HAP-1 (cell line): ENCODE measurements at regions of chr12 and their contacts with region 1.

Region 1: DNA sequence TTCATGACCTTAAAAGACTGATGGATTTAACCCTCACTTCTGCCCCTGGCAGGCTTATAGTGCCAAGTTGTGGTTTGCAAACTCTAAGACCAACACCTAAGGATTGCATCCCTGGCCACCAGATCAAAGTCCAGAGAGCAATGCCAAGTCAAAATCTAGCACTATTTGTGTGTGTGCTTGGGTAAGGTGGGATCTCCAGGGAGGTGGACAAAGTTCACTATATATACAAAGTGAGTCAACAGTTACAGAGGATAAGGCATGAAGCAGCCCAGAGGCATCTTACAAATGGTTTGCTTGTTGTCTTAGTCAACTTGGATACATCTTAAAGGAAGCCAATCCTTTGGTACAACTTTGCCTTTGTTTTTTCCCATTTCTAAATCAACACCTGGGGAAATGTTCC is 137.3 kb downstream of the MSRB3 start:
- DNase-seq: no peak
- H3K4me3 ChIP-seq: no peak overlapping the region
- H3K4me1 ChIP-seq: no peaks in the 10 kb centered on the region
- H3K27me3 ChIP-seq: no peaks in the 10 kb centered on the region

Region 2: DNA sequence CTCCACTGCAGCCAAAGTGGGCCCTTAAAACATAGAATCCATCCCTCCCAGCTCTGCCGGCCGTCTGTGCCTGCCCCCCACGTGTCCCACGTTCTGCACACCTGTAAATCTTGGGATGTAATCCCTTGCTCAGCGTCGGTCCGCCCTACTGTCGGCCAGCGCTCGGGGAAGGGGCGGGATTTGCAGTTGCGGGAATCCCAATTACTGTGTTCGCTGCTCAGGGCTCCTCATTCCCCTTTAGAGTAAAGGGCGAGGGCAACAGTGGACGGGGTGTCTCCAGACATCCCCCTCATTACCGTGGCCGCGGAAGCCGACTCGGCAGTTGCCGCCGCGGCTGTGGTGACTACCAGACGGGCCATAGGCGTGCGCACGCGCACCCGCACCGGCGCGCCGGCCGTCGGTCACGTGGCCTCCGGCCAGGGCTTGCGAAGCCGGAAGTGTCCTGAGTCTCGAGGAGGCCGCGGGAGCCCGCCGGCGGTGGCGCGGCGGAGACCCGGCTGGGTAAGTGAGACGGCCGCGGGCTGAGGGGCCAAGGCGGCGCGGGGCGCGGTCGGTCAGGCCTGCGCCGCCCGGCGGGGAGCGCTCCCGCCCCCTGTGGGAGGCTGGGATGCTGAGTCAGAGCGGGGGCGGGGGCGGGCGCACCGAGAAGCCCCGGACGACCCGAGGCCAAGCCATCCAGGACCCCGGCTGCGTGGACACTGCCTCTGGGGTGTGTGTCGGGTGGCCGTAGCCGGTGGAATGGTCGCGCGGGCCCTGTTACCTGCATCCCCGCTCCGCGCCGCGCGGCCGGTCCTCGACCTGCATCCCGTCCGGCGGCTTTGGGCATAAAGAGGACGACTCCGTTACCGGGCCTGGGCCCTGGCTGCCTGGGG is 963.9 kb before region 1 on chr12 and contains the start of gene TBK1:
- in situ Hi-C with region 1: no loop called
- DNase-seq: peak; percentile 82 to 93
- H3K4me3 ChIP-seq: peak within 1 kb of the TSS; percentile 79
- H3K4me1 ChIP-seq: peaks cover 28% of the 10 kb centered on the region
- H3K27me3 ChIP-seq: no peaks in the 10 kb centered on the region

Region 3: DNA sequence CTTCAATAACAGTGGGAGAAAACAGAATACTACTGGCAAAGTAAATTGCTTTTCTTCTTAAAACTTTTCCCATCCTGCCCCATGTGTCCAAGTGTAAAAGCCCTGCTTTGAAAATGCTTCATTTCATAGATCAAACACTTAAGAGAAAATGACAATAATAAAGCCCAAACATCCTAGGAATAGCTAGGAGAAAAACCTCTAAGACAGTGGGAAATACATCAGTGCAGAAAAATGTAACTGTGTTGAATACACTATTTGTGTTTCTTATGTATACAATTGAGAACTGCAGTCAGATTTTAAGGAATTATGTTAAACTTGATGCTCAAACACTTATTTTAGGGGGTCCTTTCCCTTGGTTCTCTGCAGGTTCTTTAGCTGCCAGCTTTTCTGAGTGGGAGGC is 43.7 kb after region 1 on chr12:
- in situ Hi-C with region 1: loop called (anchors 5 kb)
- DNase-seq: no peak
- H3K4me3 ChIP-seq: no peak overlapping the region
- H3K4me1 ChIP-seq: no peaks in the 10 kb centered on the region
- H3K27me3 ChIP-seq: no peaks in the 10 kb centered on the region

Region 4: DNA sequence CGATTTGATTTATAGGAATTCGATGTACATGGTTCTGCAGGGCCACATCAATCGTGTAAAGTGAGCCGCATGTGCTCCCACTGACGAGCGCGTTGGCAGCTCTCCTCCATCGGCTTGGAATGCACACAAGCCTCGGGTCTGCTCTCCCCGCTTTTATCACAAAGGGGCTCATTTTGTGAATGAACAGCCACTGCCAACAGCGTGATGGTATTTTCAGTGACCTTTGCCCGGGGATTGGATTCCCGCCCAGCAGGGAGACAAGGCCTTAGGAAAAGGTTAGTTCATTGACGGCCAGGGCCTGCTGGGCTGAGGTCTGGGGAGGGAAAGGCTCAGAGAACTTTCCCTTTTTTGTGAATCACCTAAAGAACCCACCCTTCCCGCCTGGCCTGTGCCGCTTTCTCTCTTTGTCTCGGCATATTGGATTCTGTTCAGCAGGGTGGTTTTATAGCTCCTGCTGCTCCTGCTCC is 94.8 kb after region 1 on chr12:
- in situ Hi-C with region 1: no loop called
- DNase-seq: no peak
- H3K4me3 ChIP-seq: no peak overlapping the region
- H3K4me1 ChIP-seq: no peaks in the 10 kb centered on the region
- H3K27me3 ChIP-seq: peaks cover under 1% of the 10 kb centered on the region